ENCODE measurements at regions of chr12 and their contacts with region 1.

Region 1: DNA sequence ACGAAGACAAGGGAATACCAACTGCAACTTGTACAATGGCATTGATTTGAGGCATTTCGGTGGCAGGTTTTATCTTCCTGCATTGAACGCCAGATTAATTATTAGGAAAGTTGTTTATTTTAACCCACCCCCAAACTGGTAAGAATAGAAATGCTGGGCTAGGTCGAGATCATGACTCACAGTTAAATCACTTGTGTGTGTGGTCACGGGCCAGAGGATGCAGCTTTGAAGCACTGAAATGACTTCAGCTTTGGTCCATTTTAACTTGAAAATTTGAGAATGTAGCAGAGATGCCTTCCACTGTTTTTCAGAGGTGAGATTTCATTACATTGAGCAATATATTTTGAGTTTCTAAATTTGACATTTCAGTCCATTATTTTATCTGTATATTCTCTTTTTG is 23.6 kb upstream of the KCNH3 start:
- DNase-seq: no peak
- H3K4me3 ChIP-seq: no peak overlapping the region
- H3K4me3 Mint-ChIP-seq: no peak overlapping the region
- H3K27ac Mint-ChIP-seq: no peak overlapping the region
- H3K4me1 ChIP-seq: no peaks in the 10 kb centered on the region
- H3K4me1 Mint-ChIP-seq: no peaks in the 10 kb centered on the region
- H3K27me3 ChIP-seq: no peaks in the 10 kb centered on the region
- H3K27me3 Mint-ChIP-seq: no peaks in the 10 kb centered on the region
- CTCF ChIP-seq: no peak

Region 2: DNA sequence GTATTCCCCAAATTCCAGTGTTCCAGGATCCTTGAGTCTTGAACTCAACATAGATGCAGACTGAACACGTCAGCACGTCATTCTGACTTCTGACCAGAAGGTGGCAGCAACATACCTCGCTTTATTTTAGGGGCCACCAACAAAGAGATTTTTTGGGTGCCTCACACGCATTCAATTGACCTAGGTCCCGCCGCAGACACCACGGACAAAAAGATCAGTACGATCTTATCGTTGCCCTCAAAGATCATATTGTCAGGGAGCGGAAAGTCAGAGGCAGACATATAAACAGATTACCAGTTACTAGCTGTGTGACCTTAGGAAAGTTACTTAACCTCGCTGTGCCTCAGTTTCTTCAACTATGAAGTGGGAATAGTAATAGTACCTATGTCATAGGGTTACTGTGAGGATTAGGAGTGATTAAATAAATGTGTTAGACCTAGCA is 226.8 kb before region 1 on chr12:
- CTCF ChIA-PET with region 1: interaction called, 7 read pairs
- POLR2A ChIA-PET with region 1: no interaction called
- intact Hi-C with region 1: loop called (anchors 1 kb)
- DNase-seq: peak in 1 of 2 experiments; percentile 75
- H3K4me3 ChIP-seq: no peak overlapping the region
- H3K4me3 Mint-ChIP-seq: no peak overlapping the region
- H3K27ac Mint-ChIP-seq: no peak overlapping the region
- H3K4me1 ChIP-seq: peaks cover 3% of the 10 kb centered on the region; the same call in 1 of the 2 replicates
- H3K4me1 Mint-ChIP-seq: peaks cover 6% of the 10 kb centered on the region
- H3K27me3 ChIP-seq: no peaks in the 10 kb centered on the region
- H3K27me3 Mint-ChIP-seq: peaks cover 3% of the 10 kb centered on the region
- CTCF ChIP-seq: peak; percentile 77 to 96

Region 3: GRCh38 chr12:49451468-49452259 is 63.6 kb before region 1 on chr12:
- CTCF ChIA-PET with region 1: interaction called, 10 read pairs
- POLR2A ChIA-PET with region 1: interaction called, 6 read pairs
- intact Hi-C with region 1: no loop called
- DNase-seq: no peak
- H3K4me3 ChIP-seq: no peak overlapping the region
- H3K4me3 Mint-ChIP-seq: no peak overlapping the region
- H3K27ac Mint-ChIP-seq: no peak overlapping the region
- H3K4me1 ChIP-seq: no peaks in the 10 kb centered on the region
- H3K4me1 Mint-ChIP-seq: peaks cover 8% of the 10 kb centered on the region
- H3K27me3 ChIP-seq: no peaks in the 10 kb centered on the region
- H3K27me3 Mint-ChIP-seq: no peaks in the 10 kb centered on the region
- CTCF ChIP-seq: no peak

Measured in Caco-2 (cell line).